Psoas muscle (tissue), 8 donors: ENCODE measurements at regions of chr1 and their contacts with region 1.

Region 1: GRCh38 chr1:182084487-182085316 is 23.2 kb upstream of the ZNF648 start:
- DNase-seq: peak; percentile 87 to 91
- ATAC-seq: peak; percentile 95 to 98 (median 95)
- H3K4me3 ChIP-seq: no peak overlapping the region
- H3K27ac ChIP-seq: no peak overlapping the region
- H3K4me1 ChIP-seq: peaks cover 3% of the 10 kb centered on the region
- H3K27me3 ChIP-seq: no peaks in the 10 kb centered on the region
- CTCF ChIP-seq: peak; percentile 85

Region 2: DNA sequence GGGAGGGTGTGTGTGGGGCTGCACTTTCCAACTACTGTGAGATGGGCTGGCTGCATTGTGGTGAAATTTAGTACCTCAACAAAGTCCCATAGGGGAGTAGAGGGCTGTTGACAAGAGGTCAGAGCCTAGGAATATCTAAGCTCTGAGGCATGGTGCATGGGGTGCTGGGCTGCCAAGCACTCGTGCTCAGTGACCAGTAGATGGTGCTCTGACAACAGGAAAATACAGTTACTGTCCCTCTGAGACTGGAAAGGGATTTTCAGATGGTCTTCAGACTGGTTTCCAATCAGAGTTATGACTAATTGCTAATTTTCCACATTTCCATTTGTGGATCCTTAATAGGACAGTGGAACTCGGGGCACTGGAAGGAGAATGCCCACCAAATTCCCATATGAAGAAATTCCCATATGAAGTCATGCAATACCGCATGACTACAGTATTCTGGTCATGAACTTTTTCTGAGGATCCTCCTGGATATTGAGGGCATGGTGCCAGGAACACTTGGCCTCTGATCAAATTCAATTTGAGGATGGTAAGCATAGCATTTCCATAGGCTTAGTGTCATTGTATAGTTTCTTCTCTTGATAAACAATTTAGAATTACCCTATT is 605.5 kb before region 1 on chr1:
- intact Hi-C with region 1: loop called (anchors 5 kb)
- DNase-seq: peak; percentile 24 to 64
- ATAC-seq: peak; percentile 86 to 96 (median 90)
- H3K4me3 ChIP-seq: no peak overlapping the region
- H3K27ac ChIP-seq: no peak overlapping the region
- H3K4me1 ChIP-seq: peaks cover 3% of the 10 kb centered on the region
- H3K27me3 ChIP-seq: peaks cover 0 to 37% (median 14%) of the 10 kb centered on the region in 3 donors
- CTCF ChIP-seq: peak; percentile 73

Region 3: DNA sequence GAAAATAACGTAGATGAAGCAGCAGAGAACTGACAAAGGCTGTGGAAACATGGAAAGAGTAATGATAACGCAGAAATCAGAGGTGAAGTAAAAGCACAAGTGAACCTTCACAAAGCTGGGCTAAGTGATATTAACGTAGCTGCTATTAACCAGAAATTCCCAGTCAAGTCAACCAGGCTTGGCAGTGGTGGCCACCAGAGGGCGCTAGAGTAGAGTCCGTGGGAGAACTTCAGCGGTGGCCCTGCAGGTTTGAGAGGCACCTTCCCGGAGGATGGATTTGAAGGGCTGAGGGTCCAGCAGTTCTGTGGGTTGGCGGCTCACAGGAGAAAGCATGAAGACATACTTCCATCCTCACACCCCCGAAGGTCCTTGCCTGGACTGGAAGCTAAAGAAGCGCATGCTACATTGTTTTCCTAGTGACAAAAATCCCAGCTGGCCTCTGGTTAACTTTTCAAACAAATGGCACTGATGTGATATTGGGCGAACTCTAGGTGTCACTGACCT is 58.5 kb after region 1 on chr1:
- intact Hi-C with region 1: loop called (anchors 5 kb)
- DNase-seq: peak; percentile 94 to 96
- ATAC-seq: peak; percentile 72 to 86 (median 82)
- H3K4me3 ChIP-seq: no peak overlapping the region
- H3K27ac ChIP-seq: peak overlapping the region; percentile 87
- H3K4me1 ChIP-seq: peaks cover 32% of the 10 kb centered on the region
- H3K27me3 ChIP-seq: no peaks in the 10 kb centered on the region
- CTCF ChIP-seq: peak; percentile 97

Region 4: DNA sequence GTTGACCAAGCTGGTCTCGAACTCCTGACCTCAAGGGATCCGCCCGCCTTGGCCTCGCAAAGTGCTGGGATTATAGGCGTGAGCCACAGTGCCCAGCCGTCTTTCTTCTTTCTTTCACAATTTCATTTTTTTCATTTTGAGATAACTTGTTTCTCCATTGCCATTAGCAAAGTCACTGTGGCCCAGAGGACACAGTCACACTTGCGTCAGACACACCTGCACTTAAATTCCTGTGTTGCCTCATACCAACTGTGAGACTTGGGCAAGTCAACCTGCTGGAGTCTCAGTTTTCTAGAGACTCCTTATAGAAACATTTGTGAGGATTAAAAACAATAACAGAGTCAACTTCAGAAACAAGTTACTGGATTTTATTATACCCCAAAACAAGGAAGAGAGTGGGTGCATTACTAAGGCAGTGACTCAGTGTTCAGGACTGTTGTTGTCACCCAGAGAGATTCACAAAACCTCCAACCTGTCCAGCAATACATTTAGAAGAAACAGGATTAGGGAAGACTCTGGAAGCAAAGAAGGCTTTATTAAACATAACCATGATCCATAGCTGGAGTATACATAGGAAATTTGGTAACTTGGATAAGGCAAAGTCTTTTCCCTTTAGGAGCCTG is 313.2 kb after region 1 on chr1:
- intact Hi-C with region 1: loop called (anchors 1 to 2 kb)
- DNase-seq: no peak
- ATAC-seq: peak in 3 of 4 donors; percentile 31 to 64 (median 48)
- H3K4me3 ChIP-seq: no peak overlapping the region
- H3K27ac ChIP-seq: peak overlapping the region; percentile 70
- H3K4me1 ChIP-seq: peaks cover 28% of the 10 kb centered on the region
- H3K27me3 ChIP-seq: no peaks in the 10 kb centered on the region
- CTCF ChIP-seq: no peak

Region 5: GRCh38 chr1:182595641-182596240 is 511.0 kb after region 1 on chr1:
- intact Hi-C with region 1: loop called (anchors 5 to 10 kb)
- DNase-seq: peak; percentile 68 to 77
- ATAC-seq: peak; percentile 76 to 89 (median 84)
- H3K4me3 ChIP-seq: no peak overlapping the region
- H3K27ac ChIP-seq: no peak overlapping the region
- H3K4me1 ChIP-seq: peaks cover 8% of the 10 kb centered on the region
- H3K27me3 ChIP-seq: no peaks in the 10 kb centered on the region
- CTCF ChIP-seq: peak; percentile 81

Region 6: GRCh38 chr1:182789138-182790076 is 704.7 kb after region 1 on chr1 and contains the start of gene NPL:
- intact Hi-C with region 1: loop called (anchors 5 kb)
- DNase-seq: peak; percentile 86 to 92
- ATAC-seq: peak; percentile 97 to 98 (median 98)
- H3K4me3 ChIP-seq: peak within 1 kb of the TSS; percentile 80
- H3K27ac ChIP-seq: peak within 1 kb of the TSS; percentile 83
- H3K4me1 ChIP-seq: peaks cover 5% of the 10 kb centered on the region
- H3K27me3 ChIP-seq: no peaks in the 10 kb centered on the region
- CTCF ChIP-seq: no peak
- total RNA-seq, gene NPL: 2.9 to 6.7 (median 5.5) TPM